ENCODE measurements at regions of chr10 and their contacts with region 1.

Region 1: GRCh38 chr10:109894516-109894915 is 28.8 kb downstream of the XPNPEP1 start:
- DNase-seq: peak; percentile 76
- ATAC-seq: peak; percentile 77 to 81

Region 2: DNA sequence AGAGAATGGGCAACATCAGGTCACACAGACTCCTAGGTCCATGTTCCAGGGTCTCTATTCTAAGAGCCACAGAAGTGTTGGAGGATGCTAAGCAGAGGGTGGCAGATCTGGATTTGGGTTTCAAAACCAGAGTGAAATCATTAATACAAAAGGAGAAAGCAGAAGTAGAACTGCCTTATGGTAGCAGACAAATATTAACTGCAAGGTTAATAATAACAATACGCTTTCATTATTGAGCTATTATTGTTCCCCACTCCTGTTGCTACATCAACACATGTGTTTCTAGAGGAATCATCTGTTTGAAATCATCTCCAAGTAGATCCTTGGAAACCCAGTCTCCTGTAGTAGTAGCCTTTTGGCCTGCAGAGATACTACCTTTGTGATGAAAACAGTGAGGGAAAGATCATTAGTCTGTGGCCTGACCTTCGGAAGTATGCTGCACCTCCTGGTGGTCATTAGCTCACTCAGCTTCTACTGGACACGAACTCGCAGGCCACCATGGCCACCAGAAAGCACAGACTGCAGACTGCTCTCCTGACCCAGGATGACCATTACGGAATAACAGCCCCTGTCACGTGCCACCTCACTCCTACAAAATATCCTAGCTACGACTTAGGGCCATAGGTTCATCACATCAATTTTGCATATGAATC is 55.8 kb before region 1 on chr10:
- intact Hi-C with region 1: no loop called
- DNase-seq: no peak
- ATAC-seq: no peak

Region 3: DNA sequence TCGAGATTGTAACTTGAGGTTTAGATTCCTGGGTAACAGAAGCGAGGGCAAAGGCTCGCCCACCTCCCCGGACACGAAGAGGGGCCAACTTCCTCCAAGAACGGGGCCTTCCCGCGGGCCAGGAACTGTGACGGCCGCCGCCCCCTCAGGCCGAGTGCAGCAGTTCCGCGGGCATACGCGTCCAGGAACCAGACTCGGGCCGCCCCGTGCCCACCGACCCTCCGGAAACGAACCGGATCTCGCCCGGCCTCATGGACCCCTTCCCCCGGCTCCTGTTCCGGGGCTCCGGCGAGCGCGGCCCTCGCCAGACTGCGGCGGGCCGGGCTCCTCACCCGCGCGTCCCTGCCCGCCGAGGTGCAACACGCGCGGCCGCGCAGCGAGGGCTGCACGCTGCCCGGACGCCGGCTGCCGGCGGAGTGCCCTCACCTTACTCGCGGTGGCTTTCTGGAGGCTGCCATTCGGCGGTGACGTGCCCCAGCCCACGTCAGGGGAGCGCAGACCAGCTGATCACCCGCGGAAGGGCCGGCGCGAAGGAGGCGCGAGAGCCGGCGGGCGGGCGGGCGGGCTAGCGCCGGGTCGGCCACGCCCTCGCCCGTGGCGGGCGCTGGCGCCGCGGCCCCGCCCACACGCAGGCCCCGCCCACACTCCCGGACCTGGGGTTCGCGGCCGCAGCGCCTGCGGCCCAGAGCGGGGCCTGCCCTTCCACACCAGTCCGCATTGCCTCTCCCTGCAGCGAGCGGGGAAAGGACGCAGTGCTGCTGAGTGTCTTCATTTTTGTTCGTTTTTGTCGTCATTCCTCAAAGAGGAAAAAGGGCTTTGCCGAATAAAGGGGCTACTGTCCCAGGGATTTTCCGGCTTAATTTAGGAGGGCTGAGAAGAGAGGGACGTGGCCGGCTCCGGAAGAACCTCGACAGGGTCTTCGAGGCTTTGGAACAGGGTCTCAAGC is 28.7 kb after region 1 on chr10 and contains the start of gene XPNPEP1:
- intact Hi-C with region 1: loop called in 1 of 2 experiments (anchors 5 kb)
- DNase-seq: peak; percentile 92
- ATAC-seq: peak; percentile 98 to 99
- total RNA-seq, gene XPNPEP1: 36.3 to 40.7 TPM

Region 4: DNA sequence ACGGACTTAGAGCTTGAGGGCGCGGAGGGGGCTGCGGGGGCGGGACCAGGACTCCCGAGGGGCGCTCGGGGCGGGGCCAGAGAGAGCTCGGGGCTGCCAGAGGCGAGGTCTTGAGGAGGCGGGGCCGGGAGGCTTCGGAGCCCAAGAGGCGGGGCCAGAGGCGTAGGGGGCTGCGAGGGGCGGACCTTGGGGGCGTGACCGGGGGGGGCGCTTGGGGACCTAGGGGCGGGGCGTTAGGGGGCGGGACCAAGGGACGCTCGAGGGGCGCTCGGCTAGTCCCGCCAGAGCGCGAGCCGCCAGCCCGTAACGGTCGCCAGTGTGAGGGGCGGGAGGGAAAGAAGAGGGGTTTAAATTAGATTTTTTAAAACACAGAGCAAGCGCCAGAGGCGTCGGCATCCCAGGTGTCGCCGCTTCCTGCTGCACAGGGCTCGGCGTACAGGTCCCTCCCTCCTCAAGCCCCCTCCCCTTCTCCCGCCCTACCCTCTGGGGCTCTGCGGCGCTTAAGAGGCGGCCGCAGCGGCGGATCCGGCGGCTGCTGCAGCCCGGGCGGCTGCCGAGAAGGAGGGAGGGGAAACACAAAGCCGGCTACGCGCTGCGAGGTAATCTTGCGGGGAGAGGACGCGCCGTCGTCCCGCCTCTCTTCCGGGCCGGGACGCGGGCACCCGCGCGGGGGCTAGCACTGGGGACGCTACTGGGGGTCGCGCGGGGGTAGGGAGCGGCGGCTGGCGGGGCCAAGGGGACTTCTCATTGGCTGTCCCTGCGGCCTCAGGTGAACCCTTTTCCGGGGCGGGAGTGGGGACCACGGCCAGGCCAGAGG is 113.4 kb after region 1 on chr10 and contains the start of gene ADD3:
- intact Hi-C with region 1: loop called (anchors 5 to 10 kb)
- DNase-seq: peak; percentile 97
- ATAC-seq: peak; percentile 93 to 94
- total RNA-seq, gene ADD3: 75.2 to 125 TPM

Region 5: DNA sequence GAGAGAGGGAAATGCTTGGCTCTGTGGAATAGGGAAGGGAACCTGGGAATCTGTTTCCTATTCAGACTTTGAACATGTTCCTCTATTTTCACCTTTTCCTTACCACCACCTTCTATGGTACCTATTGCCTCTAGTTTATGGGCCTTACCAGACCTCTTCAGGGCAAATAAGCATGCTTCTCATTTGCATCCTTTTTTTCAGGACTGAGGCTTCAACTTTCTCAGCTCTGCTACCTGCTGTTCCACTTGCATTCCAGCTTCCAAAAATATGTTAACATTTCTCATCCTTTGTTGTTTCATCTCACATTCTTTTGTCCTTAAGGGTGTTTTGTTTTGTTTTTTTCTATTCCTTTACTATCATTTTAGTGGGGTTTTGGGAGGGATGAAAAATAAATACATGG is 235.0 kb after region 1 on chr10:
- intact Hi-C with region 1: loop called (anchors 5 to 10 kb)
- DNase-seq: no peak
- ATAC-seq: no peak